Activated naive CD4-positive, alpha-beta T cell treated with anti-CD3 and anti-CD28 coated beads for 36 hours (primary cell): ENCODE measurements at regions of chr14 and their contacts with region 1.

Region 1: DNA sequence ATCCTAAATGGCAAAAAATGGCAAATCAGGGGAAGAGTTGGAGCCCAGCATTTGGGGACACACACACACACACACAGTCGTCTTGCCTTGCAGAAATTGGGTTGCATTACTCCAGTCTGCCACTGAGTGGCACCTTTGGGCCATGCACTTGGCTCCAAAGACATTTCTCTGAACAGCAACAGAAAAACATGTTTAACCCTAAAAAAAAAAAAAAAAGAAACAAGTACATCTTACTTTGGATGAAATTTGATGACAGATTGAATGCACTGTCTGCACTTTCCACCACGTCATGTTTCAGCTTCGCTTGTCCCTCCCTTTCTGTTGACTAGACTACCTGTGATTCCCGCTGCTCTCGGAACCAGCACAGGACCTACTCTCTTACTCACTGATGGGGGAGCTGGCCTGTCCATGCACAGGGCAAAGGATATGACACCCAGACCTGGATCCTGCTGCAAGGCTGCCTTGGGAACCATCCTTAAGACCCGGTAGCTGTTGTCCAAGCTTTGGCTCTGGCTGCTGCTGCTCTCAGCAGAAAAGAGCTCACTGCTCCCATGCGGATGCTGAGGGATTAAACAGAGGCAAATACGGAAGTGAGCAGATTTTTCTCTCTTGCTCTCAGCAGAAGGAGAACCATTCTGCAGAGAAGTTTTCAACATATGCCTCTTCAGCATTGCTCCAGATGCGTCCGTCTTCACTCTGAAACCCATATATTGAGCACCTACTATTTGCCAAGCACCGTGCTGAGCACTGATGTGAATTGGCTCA is 376.8 kb downstream of the DPF3 start:
- DNase-seq: peak; percentile 86
- H3K4me3 Mint-ChIP-seq: no peak overlapping the region
- H3K27ac Mint-ChIP-seq: no peak overlapping the region
- H3K4me1 Mint-ChIP-seq: peaks cover 50% of the 10 kb centered on the region
- H3K27me3 Mint-ChIP-seq: no peaks in the 10 kb centered on the region

Region 2: DNA sequence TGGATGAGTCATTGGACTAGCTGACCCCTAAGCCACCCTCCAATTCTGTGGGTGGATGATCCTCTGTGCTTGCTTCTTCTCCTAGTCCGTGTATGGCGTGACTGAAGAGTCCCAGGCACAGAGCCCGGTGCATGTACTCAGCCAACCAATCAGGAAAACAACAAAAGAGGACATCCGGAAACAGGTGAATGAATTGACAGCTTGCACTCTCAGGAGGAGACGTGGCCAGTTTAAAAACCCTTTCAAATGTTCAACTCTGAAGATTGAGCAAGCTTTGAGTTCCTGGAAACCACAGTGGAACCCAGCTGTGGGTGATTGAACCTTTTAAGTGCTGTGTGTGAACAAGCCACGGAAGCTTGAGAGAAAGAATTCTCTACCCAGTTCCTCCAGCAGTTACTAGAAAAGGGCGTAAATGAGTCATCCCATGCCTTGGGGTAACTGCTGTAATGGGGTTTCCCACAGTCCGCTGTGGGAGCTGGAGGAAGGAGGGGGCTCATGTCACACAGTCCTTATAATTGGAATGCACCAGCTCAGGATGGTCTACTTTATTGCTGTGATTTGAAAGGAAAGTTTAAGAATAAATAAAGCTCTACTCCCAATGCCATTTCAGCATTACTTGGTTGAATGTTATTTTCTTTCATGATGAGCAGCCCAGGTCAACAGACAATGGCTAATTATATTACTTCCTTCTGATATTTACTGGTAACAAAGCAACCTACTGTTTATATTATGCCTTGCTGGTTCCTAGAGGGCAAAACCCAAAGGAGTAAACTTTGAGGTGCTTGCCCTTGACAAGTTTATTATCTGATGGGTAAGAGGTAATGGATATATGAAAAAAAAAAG is 40.2 kb before region 1 on chr14:
- CTCF ChIA-PET with region 1: interaction called, 6 read pairs
- intact Hi-C with region 1: loop called (anchors 1 kb)
- DNase-seq: peak; percentile 90
- H3K4me3 Mint-ChIP-seq: peak overlapping the region; percentile 38
- H3K27ac Mint-ChIP-seq: peak overlapping the region; percentile 81
- H3K4me1 Mint-ChIP-seq: peaks cover 31% of the 10 kb centered on the region
- H3K27me3 Mint-ChIP-seq: peaks cover 5% of the 10 kb centered on the region

Region 3: DNA sequence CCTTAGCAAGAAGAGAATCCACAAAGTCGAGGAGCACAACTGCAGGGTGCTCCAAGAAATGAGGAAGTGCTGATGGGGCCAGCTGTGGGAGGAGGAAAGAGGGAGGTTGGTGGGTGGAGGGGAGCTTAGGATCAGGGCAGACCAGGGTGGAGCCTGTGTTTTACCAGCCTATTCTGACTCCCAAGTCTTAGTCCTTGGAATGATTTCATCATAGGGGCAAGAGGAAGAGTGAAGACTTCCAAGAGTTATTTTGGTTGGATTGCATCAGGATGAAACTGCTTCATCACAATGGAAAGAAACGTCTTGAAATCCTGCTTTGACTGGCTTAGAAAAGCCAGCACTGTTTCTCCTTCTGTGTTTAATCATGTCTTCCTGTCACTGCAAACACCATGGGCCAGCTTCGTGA is 182.7 kb after region 1 on chr14:
- CTCF ChIA-PET with region 1: interaction called, 3 read pairs
- intact Hi-C with region 1: loop called (anchors 1 kb)
- DNase-seq: peak; percentile 8
- H3K4me3 Mint-ChIP-seq: no peak overlapping the region
- H3K27ac Mint-ChIP-seq: no peak overlapping the region
- H3K4me1 Mint-ChIP-seq: peaks cover 10% of the 10 kb centered on the region
- H3K27me3 Mint-ChIP-seq: no peaks in the 10 kb centered on the region

Region 4: GRCh38 chr14:72893636-72894321 is 376.7 kb after region 1 on chr14 and contains the start of gene DPF3:
- CTCF ChIA-PET with region 1: interaction called, 185 read pairs
- intact Hi-C with region 1: loop called (anchors 1 kb)
- DNase-seq: peak; percentile 91
- H3K4me3 Mint-ChIP-seq: peak within 1 kb of the TSS; percentile 87
- H3K27ac Mint-ChIP-seq: peak within 1 kb of the TSS; percentile 46
- H3K4me1 Mint-ChIP-seq: peaks cover 18% of the 10 kb centered on the region
- H3K27me3 Mint-ChIP-seq: peaks cover 50% of the 10 kb centered on the region
- total RNA-seq, gene DPF3: 0.29 to 0.47 TPM

Region 5: GRCh38 chr14:72948481-72949138 is 431.5 kb after region 1 on chr14:
- CTCF ChIA-PET with region 1: interaction called, 14 read pairs
- intact Hi-C with region 1: loop called (anchors 1 kb)
- DNase-seq: peak; percentile 82
- H3K4me3 Mint-ChIP-seq: no peak overlapping the region
- H3K27ac Mint-ChIP-seq: no peak overlapping the region
- H3K4me1 Mint-ChIP-seq: no peaks in the 10 kb centered on the region
- H3K27me3 Mint-ChIP-seq: no peaks in the 10 kb centered on the region